Dorsolateral prefrontal cortex (tissue), 120 donors: ENCODE measurements at regions of chr22 and their contacts with region 1.

Region 1: GRCh38 chr22:16932577-16932976 is 75.4 kb downstream of the GAB4 start:
- DNase-seq: peak in 2 of 10 donors; percentile 13 to 52
- H3K4me3 ChIP-seq: no peak overlapping the region
- H3K27ac ChIP-seq: no peak overlapping the region
- H3K27me3 ChIP-seq: peaks cover 0 to 52% (median 8%) of the 10 kb centered on the region in 45 donors
- CTCF ChIP-seq: peak in 50 of 56 donors; percentile 12 to 71 (median 42)

Region 2: GRCh38 chr22:16989915-16990314 is 57.3 kb after region 1 on chr22:
- intact Hi-C with region 1: loop called in 1 of 2 experiments (anchors 10 kb)
- DNase-seq: no peak
- H3K4me3 ChIP-seq: no peak overlapping the region
- H3K27ac ChIP-seq: no peak overlapping the region
- H3K27me3 ChIP-seq: peaks cover 0 to 23% (median 0%) of the 10 kb centered on the region in 45 donors
- CTCF ChIP-seq: no peak

Region 3: DNA sequence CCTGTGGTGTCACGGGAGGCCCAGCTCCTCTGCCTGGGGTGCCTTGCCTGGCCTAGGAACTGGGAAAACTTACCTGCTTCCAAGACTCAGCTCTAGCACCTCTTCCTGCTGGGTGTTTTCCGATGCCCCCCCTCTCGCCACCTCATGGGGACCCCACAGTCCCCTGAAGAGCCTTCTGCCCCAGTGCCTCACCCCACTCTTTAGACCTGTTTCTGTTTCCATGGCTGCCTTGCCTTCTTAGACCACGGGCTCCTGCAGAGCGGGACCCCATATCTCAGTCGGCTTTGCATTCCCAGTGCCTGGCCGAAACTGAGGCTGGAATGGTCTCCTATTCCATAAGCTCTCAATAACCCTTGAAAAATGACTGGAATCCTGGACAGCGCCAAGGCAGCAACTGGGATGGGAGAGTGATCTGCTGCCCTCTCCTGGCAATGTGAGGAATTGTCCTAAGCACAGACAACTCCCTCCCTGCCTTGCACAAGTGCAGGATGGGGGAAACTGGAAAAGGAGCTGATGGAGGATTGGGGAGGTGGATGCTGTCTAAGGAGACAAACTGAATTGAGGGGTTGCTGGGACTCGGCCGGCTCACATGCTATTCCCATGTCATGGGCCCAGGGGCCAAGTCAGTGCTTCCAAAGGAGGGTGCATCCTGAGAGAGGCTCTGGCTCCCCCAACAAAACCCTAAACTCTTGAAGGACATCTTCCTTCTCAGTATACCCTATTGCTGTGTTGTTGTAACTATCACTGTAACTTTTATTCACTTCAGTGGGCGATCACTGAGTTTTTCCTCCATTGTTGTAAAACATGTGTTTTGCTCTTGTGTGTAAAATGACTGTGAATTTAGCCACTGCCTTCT is 125.6 kb after region 1 on chr22:
- intact Hi-C with region 1: loop called (anchors 1 to 5 kb)
- DNase-seq: peak; percentile 44 to 79 (median 72)
- H3K4me3 ChIP-seq: no peak overlapping the region
- H3K27ac ChIP-seq: no peak overlapping the region
- H3K27me3 ChIP-seq: no peaks in the 10 kb centered on the region
- CTCF ChIP-seq: peak; percentile 68 to 98 (median 95)